IMR-90 (cell line): ENCODE measurements at regions of chr3 and their contacts with region 1.

Region 1: DNA sequence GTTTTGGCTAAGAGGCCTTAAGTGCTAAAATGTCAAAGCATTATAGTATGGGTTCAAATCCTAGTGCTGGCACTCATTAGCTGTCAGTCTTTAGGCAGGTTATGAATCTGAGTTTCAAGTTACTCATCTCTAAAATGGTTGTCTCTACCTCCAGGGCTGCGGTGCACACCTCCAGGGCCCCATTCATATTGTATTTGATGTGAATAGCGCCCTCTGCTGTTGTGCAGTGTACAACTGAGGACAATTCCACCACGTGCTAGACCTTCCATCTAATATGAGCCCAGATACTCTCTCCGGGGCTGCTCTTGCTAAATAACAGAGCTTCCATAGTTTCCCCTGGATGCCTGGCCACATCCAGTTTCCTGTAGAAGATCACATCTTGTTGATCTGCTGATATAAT is 54.3 kb downstream of the OXNAD1 start:
- DNase-seq: no peak
- ATAC-seq: no peak
- H3K4me3 ChIP-seq: no peak overlapping the region
- H3K27ac ChIP-seq: peak overlapping the region; percentile 25; the same call in 1 of the 2 replicates
- H3K4me1 ChIP-seq: peaks cover 22% of the 10 kb centered on the region
- H3K27me3 ChIP-seq: no peaks in the 10 kb centered on the region
- CTCF ChIP-seq: 0 out of 2 replicates have a peak, but pooled peaks have one; percentile 20
- POLR2A ChIP-seq: no peak
- RAD21 ChIP-seq: no peak

Region 2: DNA sequence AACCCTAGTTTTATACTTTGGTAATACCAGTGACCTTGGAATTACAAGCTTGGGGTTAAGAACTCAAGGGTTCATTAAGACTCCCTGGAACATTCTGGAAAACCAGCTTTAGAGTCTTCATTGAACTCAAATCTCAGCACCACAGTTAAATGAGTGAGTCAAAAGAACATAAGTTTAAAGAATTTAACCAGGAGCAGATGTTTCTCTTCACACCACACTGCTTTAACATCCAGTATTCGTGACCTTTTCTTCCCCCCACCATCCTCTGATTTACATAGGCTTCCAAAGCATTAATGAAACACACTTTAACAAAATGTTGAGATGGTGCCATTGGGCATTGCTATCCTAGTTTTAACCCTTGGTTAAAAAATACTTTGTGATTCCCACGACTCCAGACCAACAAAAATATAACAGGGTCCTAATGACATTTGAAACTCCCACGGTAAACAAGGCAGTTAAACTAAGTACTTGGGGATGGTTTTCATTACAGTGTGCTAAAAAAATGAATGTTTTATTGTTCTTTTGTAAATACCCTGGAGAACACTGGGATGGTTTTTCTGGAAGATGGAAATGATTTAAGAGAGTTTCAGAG is 69.6 kb after region 1 on chr3:
- CTCF ChIA-PET with region 1: no interaction called
- POLR2A ChIA-PET with region 1: no interaction called
- dilution Hi-C with region 1: no loop called
- in situ Hi-C with region 1: no loop called
- intact Hi-C with region 1: loop called (anchors 5 kb)
- DNase-seq: peak; percentile 78
- ATAC-seq: peak; percentile 59
- H3K4me3 ChIP-seq: no peak overlapping the region
- H3K27ac ChIP-seq: peak overlapping the region; percentile 48; the same call in 1 of the 2 replicates
- H3K4me1 ChIP-seq: peaks cover 38% of the 10 kb centered on the region
- H3K27me3 ChIP-seq: no peaks in the 10 kb centered on the region
- CTCF ChIP-seq: no peak
- POLR2A ChIP-seq: no peak
- RAD21 ChIP-seq: no peak

Region 3: GRCh38 chr3:16482770-16483531 is 163.6 kb after region 1 on chr3:
- CTCF ChIA-PET with region 1: no interaction called
- POLR2A ChIA-PET with region 1: no interaction called
- dilution Hi-C with region 1: no loop called
- in situ Hi-C with region 1: no loop called
- intact Hi-C with region 1: loop called (anchors 1 kb)
- DNase-seq: peak; percentile 39
- ATAC-seq: no peak; the same call in 1 of the 2 replicates
- H3K4me3 ChIP-seq: no peak overlapping the region
- H3K27ac ChIP-seq: peak overlapping the region; percentile 78
- H3K4me1 ChIP-seq: peaks cover 38% of the 10 kb centered on the region
- H3K27me3 ChIP-seq: no peaks in the 10 kb centered on the region
- CTCF ChIP-seq: no peak
- POLR2A ChIP-seq: no peak
- RAD21 ChIP-seq: no peak